ENCODE measurements at regions of chr7 and their contacts with region 1.

Region 1: GRCh38 chr7:50156706-50157105 is 63.7 kb upstream of the ZPBP start:
- DNase-seq: no peak
- ATAC-seq: no peak
- H3K4me3 ChIP-seq: no peak overlapping the region
- H3K27ac ChIP-seq: no peak overlapping the region
- H3K4me1 ChIP-seq: no peaks in the 10 kb centered on the region
- H3K27me3 ChIP-seq: no peaks in the 10 kb centered on the region
- CTCF ChIP-seq: no peak
- POLR2A ChIP-seq: no peak

Region 2: GRCh38 chr7:49995681-49996080 is 161.0 kb before region 1 on chr7:
- intact Hi-C with region 1: no loop called
- DNase-seq: no peak
- ATAC-seq: no peak
- H3K4me3 ChIP-seq: no peak overlapping the region
- H3K27ac ChIP-seq: no peak overlapping the region
- H3K4me1 ChIP-seq: no peaks in the 10 kb centered on the region
- H3K27me3 ChIP-seq: no peaks in the 10 kb centered on the region
- CTCF ChIP-seq: no peak
- POLR2A ChIP-seq: no peak

Region 3: DNA sequence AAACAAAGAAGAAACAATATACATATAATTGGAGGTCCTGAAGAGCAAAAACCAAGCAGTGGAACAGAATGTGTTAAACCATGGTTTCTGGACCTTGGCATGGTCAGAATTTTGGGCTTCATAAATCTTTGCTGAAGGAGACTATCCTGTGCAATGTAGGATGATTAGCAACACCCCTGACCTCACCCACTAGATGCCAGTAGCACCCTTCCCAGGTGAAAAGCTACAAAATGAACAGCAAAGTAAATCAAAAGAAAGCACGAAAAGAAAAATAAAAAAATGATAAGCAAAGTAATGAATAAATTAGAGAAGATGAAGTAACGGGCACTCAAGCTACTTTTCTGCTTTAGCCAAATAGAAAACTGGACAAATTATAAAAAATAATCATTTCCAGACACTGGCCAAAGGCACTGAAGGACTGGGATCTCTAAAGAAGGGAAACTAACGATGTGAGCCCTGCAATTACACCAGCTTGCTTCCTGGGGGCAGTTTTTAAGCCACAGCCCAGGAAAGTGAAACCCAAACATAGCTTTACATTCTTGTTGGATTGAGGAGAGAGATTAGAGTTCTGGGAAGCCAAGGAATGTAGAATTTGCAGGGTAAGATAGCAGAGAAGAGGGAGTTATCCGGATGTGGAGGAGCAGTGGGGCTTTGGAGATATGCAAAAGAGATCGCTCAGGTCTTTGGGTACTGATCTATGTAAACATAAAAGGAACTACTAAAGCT is 44.3 kb before region 1 on chr7:
- intact Hi-C with region 1: loop called (anchors 5 kb)
- DNase-seq: no peak
- ATAC-seq: no peak
- H3K4me3 ChIP-seq: no peak overlapping the region
- H3K27ac ChIP-seq: no peak overlapping the region
- H3K4me1 ChIP-seq: no peaks in the 10 kb centered on the region
- H3K27me3 ChIP-seq: no peaks in the 10 kb centered on the region
- CTCF ChIP-seq: no peak
- POLR2A ChIP-seq: no peak